SK-N-SH (cell line): ENCODE measurements at regions of chr10 and their contacts with region 1.

Region 1: GRCh38 chr10:78047314-78047891 is 13.7 kb downstream of the RPS24 start:
- DNase-seq: peak; percentile 80
- H3K4me3 ChIP-seq: no peak overlapping the region; a peak in 1 of 4 replicates
- H3K27ac ChIP-seq: peak overlapping the region in 1 of 2 experiments; percentile 70; a peak in 2 of 4 replicates
- H3K4me1 ChIP-seq: peaks cover 22 to 26% of the 10 kb centered on the region in 2 experiments; a peak in 3 of 4 replicates
- H3K27me3 ChIP-seq: no peaks in the 10 kb centered on the region
- CTCF ChIP-seq: peak; percentile 94
- EP300 ChIP-seq: peak in 1 of 2 experiments; percentile 57; a peak in 1 of 4 replicates
- RAD21 ChIP-seq: peak; percentile 100

Region 2: GRCh38 chr10:78035025-78035424 is 12.4 kb before region 1 on chr10:
- CTCF ChIA-PET with region 1: interaction called, 28 read pairs
- POLR2A ChIA-PET with region 1: interaction called, 5 read pairs
- DNase-seq: no peak
- H3K4me3 ChIP-seq: peak overlapping the region; percentile 73 to 76
- H3K27ac ChIP-seq: no peak overlapping the region
- H3K4me1 ChIP-seq: peaks cover 22 to 41% of the 10 kb centered on the region in 2 experiments; a peak in 3 of 4 replicates
- H3K27me3 ChIP-seq: no peaks in the 10 kb centered on the region
- CTCF ChIP-seq: no peak
- EP300 ChIP-seq: no peak
- RAD21 ChIP-seq: no peak

Region 3: DNA sequence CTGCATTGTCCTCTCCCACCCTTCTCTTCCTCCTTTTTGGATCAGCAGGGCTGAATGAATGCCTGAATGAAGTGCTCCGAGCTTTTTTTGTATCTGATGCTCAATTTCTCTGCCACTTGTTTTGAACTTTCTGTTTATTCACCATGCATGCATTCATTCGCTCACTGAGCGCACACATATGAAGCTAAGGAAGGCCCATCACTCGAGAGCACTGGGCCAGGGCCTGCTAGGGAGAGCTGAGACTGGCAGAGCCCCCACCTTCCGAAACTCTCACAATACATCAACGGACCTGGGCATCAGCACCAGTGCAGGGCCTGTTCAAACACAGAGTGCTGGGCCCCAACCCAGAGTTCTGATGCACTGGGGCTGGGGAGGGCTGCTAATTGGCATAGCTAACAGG is 32.0 kb after region 1 on chr10:
- CTCF ChIA-PET with region 1: interaction called, 19 read pairs
- POLR2A ChIA-PET with region 1: no interaction called
- DNase-seq: no peak
- H3K4me3 ChIP-seq: no peak overlapping the region
- H3K27ac ChIP-seq: no peak overlapping the region
- H3K4me1 ChIP-seq: peaks cover 0 to 9% of the 10 kb centered on the region in 2 experiments; a peak in 1 of 4 replicates
- H3K27me3 ChIP-seq: no peaks in the 10 kb centered on the region
- CTCF ChIP-seq: no peak
- EP300 ChIP-seq: no peak
- RAD21 ChIP-seq: no peak

Region 4: DNA sequence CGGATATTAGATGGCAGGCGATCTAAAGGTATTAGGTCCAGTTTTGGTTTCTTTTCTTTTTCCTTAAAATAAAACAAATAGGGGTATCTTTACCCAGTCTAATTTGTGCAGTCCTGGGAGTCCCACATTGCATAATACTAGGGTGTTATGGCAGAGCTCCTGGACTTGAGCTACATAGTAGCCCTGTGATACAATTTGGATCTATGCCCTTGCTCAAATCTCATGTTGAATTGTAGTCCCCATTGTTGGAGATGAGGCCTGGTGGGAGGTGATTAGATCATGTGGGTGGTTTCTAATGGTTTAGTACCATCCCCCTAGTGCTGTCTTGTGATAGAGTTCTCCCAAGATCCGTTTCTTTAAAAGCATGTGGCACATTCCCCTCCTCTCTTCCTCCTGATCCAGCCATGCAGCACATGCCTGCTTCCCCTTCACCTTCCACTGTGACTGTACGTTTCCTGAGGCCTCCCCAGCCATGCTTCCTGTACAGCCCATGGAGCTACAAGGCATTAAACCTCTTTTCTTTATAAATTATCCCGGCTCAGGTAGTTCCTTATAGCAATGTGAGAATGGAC is 128.1 kb after region 1 on chr10:
- CTCF ChIA-PET with region 1: interaction called, 122 read pairs
- POLR2A ChIA-PET with region 1: no interaction called
- DNase-seq: no peak
- H3K4me3 ChIP-seq: no peak overlapping the region
- H3K27ac ChIP-seq: no peak overlapping the region
- H3K4me1 ChIP-seq: no peaks in the 10 kb centered on the region; a peak in 2 of 4 replicates
- H3K27me3 ChIP-seq: no peaks in the 10 kb centered on the region
- CTCF ChIP-seq: no peak
- EP300 ChIP-seq: no peak
- RAD21 ChIP-seq: no peak

Region 5: DNA sequence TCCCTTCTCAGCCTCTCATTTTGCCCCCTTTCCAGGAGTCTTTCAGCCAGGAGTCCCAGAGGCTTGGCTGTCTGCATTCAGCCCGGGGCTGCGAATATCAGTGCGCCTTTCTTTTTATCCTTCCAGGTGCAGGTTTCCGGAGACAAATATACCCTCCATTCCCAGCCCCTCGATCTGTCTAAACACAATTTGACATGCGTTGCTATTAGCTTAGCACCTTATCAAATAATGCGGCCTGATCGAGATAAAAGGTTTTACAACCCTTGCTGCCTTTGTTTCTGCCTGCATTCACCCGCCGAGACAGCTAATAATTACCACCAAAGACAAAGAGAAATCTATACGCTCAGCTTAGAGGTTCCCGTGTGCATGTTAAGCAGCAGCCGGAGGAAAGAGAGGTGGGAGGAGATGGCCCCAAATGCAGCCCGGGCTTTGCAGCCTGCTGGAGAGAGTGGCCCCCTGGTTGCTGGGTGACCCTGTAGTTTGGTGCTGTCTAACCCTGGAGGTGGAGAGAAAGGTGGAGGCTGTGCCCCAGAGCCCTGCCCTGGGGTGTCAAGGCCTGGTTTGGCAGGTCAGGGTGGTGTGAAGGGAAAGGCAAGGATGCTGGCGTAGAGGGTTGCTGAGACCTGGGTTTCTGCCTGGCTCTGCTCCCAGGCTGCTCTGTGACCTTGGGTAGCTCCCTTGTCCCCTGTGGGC is 171.5 kb after region 1 on chr10:
- CTCF ChIA-PET with region 1: interaction called, 26 read pairs
- POLR2A ChIA-PET with region 1: no interaction called
- DNase-seq: no peak
- H3K4me3 ChIP-seq: no peak overlapping the region
- H3K27ac ChIP-seq: peak overlapping the region in 1 of 2 experiments; percentile 14; a peak in 1 of 4 replicates
- H3K4me1 ChIP-seq: peaks cover 0 to 55% of the 10 kb centered on the region in 2 experiments; a peak in 2 of 4 replicates
- H3K27me3 ChIP-seq: no peaks in the 10 kb centered on the region
- CTCF ChIP-seq: no peak
- EP300 ChIP-seq: no peak
- RAD21 ChIP-seq: no peak

Region 6: GRCh38 chr10:78432583-78432982 is 385.2 kb after region 1 on chr10:
- CTCF ChIA-PET with region 1: interaction called, 16 read pairs
- POLR2A ChIA-PET with region 1: no interaction called
- DNase-seq: no peak
- H3K4me3 ChIP-seq: no peak overlapping the region
- H3K27ac ChIP-seq: peak overlapping the region in 1 of 2 experiments; percentile 99; a peak in 2 of 4 replicates
- H3K4me1 ChIP-seq: peaks cover 0 to 54% of the 10 kb centered on the region in 2 experiments; a peak in 2 of 4 replicates
- H3K27me3 ChIP-seq: no peaks in the 10 kb centered on the region
- CTCF ChIP-seq: no peak; the same call in 1 of the 2 replicates
- EP300 ChIP-seq: no peak
- RAD21 ChIP-seq: peak; percentile 63